Activated T-helper 2 cell treated with anti-CD3 and anti-CD28 coated beads, Interferon-gamma antibody, Interleukin-2, Interleukin-4, amounts not matched to agents 10 μg/mL and 5 μg/mL and 100 μg/mL, durations not matched to agents 14 hours and 24 hours and 36 hours (primary cell): ENCODE measurements at regions of chr15 and their contacts with region 1.

Region 1: DNA sequence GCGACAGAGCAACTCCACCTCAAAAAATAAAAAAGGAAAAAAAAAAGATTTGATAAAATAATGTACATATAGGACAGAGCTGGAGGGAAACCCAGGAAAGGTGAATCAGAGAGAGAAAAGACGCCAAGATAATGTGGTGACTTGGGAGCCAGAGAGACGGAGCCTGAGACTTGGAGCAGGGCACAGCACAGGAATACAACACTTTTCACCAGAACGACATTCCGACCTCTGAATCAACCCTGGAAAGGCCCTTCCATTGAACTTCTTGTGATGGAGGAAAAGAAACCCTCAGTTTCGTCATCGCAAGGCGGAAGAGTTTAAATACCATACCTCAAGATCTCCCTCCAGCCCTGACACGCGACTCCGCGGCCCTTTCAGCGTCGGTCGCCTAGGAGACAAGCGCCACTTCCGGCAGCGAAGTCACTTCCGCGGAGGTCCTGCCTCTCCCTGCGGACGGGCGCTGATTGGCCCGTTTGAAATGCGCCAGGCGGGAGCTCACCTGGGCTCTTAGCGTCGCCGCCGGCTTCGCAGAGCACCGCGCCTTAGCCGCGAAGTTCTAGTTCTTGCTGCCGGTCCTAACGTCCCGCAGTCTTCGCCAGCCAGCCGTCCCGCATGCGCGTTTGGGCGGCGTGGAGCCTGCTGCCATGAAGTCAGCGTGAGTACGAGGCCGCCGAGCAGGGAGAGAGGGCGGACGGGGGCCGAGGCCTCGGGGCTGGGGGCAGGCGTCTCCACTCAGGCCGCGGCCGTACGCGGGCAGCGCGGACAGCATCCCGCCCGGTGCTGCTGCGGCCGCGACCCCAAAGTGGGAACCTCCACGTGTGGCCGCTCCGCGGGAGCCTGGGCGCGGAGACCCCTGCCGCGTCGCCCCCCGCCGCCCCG is at the start of gene KIF23:
- DNase-seq: peak; percentile 92
- H3K4me3 Mint-ChIP-seq: peak within 1 kb of the TSS; percentile 89
- H3K27ac Mint-ChIP-seq: peak within 1 kb of the TSS; percentile 75
- H3K4me1 Mint-ChIP-seq: peaks cover 34% of the 10 kb centered on the region
- H3K27me3 Mint-ChIP-seq: peaks cover 3% of the 10 kb centered on the region
- total RNA-seq, gene KIF23: 44.5 and 46.8 TPM in 2 replicates

Region 2: DNA sequence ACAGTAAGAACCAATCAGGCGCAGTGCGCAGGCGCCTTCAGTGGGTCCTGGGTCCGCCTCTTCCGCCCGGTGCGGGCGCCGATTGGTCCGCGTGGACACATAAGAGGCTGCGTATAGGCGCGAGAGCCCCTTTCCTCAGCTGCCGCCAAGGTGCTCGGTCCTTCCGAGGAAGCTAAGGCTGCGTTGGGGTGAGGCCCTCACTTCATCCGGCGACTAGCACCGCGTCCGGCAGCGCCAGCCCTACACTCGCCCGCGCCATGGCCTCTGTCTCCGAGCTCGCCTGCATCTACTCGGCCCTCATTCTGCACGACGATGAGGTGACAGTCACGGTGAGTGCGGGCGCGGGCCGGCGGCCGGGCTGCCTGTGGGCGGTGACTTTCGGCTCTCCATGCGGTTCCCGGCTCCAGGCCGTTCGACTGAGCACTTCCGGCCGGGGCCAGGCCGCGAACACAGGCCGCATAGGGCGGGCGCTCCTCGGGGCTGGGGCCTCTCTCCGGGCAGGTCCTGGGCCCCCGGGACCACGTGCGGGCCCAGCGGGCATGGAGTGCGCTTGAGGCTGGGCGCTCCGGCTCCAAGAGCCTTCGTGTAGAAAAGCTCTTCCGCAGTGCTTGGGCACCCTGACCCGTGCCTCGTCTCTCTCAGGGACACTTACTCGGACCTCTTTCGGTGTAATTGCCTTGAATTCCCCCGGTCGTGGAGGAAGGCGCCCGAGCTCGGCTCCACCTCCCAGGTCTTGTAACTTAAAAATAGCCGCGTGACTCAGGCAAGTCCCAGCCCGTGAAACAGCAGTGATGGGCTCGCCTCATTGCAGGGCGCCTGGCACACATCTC is 38.8 kb after region 1 on chr15 and contains the start of gene RPLP1:
- intact Hi-C with region 1: loop called (anchors 1 kb)
- DNase-seq: peak; percentile 94
- H3K4me3 Mint-ChIP-seq: peak within 1 kb of the TSS; percentile 99
- H3K27ac Mint-ChIP-seq: peak within 1 kb of the TSS; percentile 99
- H3K4me1 Mint-ChIP-seq: peaks cover 28% of the 10 kb centered on the region
- H3K27me3 Mint-ChIP-seq: no peaks in the 10 kb centered on the region
- total RNA-seq, gene RPLP1: 1,844 and 1,891 TPM in 2 replicates